H1 (cell line): ENCODE measurements at regions of chr14 and their contacts with region 1.

Region 1: DNA sequence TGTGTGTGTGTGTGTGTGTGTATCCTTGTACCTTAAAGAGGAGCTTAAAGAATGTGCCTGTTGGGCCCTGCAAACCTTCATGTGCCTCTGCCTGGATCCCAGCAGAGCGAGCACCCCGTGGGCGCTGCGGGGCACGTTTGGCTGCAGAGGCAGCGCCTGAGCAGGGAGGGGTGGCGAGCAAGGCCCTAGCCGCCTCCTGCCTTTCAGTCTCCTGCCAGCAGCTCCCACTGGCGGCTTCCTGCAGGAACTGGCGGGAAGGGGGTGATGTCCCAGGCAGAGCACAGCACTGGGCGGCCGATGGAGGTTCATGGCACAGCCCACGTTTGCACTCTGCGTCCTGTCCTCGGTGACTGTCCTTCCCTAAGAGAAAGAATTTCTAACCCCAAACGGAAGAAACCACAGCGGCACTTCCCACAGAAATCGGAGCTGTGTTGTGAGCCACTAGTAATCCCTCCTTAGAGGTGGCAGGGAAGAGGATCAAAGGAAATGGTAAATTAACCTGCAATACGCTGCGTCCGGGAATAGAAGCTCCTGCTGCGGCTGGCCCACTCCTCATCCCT is 19.8 kb downstream of the ZBTB42 start:
- DNase-seq: peak; percentile 49 to 63
- H3K4me3 ChIP-seq: no peak overlapping the region
- H3K27ac ChIP-seq: no peak overlapping the region
- H3K4me1 ChIP-seq: peaks cover 0 to 5% (median under 1%) of the 10 kb centered on the region in 4 experiments; a peak in 3 of 7 replicates
- H3K27me3 ChIP-seq: peaks cover 0 to 21% (median 13%) of the 10 kb centered on the region in 4 experiments; a peak in 6 of 7 replicates
- CTCF ChIP-seq: peak; percentile 67 to 73 (median 69)
- EP300 ChIP-seq: peak in 1 of 2 experiments; percentile 84; a peak in 1 of 3 replicates
- POLR2A ChIP-seq: no peak
- RAD21 ChIP-seq: peak; percentile 51 to 61

Region 2: DNA sequence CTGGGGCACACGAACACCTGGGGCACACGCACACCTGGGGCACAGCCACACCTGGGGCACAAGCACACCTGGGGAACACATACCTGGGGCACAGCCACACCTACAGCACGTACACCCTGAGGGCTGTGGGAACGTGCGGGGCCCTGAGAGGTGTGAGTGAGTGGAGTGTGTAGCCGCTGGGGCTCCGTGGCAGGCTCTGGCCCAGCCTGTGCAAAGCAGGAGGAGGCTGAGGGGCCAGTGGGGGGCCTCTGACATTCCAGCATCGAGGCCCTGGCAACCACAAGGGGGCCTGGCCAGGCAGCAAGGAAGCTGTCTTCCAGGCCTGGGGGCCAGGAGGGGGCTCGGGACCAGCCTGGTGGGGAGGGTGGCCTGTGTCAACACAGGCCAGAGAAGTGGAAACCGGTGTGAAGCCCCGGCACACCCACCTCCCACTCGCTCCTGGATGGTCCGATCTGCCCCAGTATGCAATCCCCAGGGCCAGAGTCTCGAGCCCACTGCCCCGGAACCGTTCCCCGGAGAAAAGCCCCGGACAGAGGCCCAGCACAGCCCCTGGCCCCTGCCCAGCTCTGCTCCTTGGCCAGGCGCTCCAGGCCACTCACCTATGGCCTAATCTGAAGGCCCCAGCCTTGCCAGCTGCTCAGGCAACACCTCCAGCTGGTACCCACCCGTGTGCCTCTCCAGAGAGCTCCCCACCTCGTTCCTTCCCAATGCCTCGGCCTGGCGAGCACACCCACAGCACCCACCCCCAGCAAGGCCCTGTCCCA is 43.1 kb before region 1 on chr14:
- CTCF ChIA-PET with region 1: interaction called, 35 read pairs
- POLR2A ChIA-PET with region 1: no interaction called
- DNase-seq: peak in 1 of 2 experiments; percentile 62
- H3K4me3 ChIP-seq: no peak overlapping the region
- H3K27ac ChIP-seq: no peak overlapping the region
- H3K4me1 ChIP-seq: no peaks in the 10 kb centered on the region
- H3K27me3 ChIP-seq: no peaks in the 10 kb centered on the region
- CTCF ChIP-seq: peak in 2 of 3 experiments; percentile 39 to 40; a peak in 3 of 4 replicates
- EP300 ChIP-seq: no peak
- POLR2A ChIP-seq: no peak
- RAD21 ChIP-seq: peak; percentile 10 to 36; a peak in 2 of 4 replicates

Region 3: GRCh38 chr14:104794641-104795467 is 25.9 kb before region 1 on chr14:
- CTCF ChIA-PET with region 1: interaction called, 15 read pairs
- POLR2A ChIA-PET with region 1: interaction called, 4 read pairs
- DNase-seq: no peak
- H3K4me3 ChIP-seq: peak overlapping the region; percentile 56 to 74 (median 60)
- H3K27ac ChIP-seq: no peak overlapping the region
- H3K4me1 ChIP-seq: peaks cover 4 to 48% (median 33%) of the 10 kb centered on the region in 4 experiments
- H3K27me3 ChIP-seq: peaks cover 6 to 47% (median 40%) of the 10 kb centered on the region in 4 experiments
- CTCF ChIP-seq: no peak
- EP300 ChIP-seq: no peak
- POLR2A ChIP-seq: no peak
- RAD21 ChIP-seq: no peak